AG04450 (cell line): ENCODE measurements at regions of chr15 and their contacts with region 1.

Region 1: GRCh38 chr15:94119923-94120775 is 111.2 kb upstream of the MCTP2 start:
- DNase-seq: peak; percentile 84
- H3K4me3 ChIP-seq: no peak overlapping the region
- H3K27ac ChIP-seq: no peak overlapping the region
- H3K27me3 ChIP-seq: no peaks in the 10 kb centered on the region
- CTCF ChIP-seq: peak; percentile 100

Region 2: GRCh38 chr15:93087825-93088199 is 1032.3 kb before region 1 on chr15:
- CTCF ChIA-PET with region 1: interaction called, 31 read pairs
- POLR2A ChIA-PET with region 1: no interaction called
- DNase-seq: no peak
- H3K4me3 ChIP-seq: no peak overlapping the region; the same call in 1 of the 2 replicates
- H3K27ac ChIP-seq: no peak overlapping the region
- H3K27me3 ChIP-seq: peaks cover 60% of the 10 kb centered on the region
- CTCF ChIP-seq: peak; percentile 74

Region 3: GRCh38 chr15:93288728-93289294 is 831.3 kb before region 1 on chr15:
- CTCF ChIA-PET with region 1: no interaction called
- POLR2A ChIA-PET with region 1: no interaction called
- DNase-seq: no peak
- H3K4me3 ChIP-seq: no peak overlapping the region
- H3K27ac ChIP-seq: no peak overlapping the region
- H3K27me3 ChIP-seq: no peaks in the 10 kb centered on the region
- CTCF ChIP-seq: no peak

Region 4: GRCh38 chr15:93989440-93989998 is 130.6 kb before region 1 on chr15:
- CTCF ChIA-PET with region 1: interaction called, 21 read pairs
- POLR2A ChIA-PET with region 1: interaction called, 4 read pairs
- DNase-seq: no peak
- H3K4me3 ChIP-seq: no peak overlapping the region
- H3K27ac ChIP-seq: no peak overlapping the region
- H3K27me3 ChIP-seq: no peaks in the 10 kb centered on the region
- CTCF ChIP-seq: no peak

Region 5: DNA sequence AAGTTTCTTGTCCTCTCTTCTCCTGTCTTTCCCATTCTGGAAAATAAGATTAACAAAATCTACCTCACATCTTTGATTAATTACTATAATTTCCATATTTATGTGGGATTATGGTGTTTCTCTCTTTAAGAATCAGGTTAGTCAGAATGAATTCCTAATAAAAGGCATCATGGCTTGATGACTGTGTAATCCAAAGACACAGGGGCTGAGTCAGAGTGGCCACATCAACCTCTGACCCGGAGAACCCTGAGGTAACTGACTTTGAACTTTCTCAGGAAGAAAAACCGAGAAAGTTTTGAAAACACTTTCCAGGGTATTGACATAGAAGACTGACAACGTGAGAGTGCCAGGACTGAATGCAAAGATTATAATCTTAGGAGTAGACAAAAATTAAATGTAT is 59.1 kb before region 1 on chr15:
- CTCF ChIA-PET with region 1: interaction called, 22 read pairs
- POLR2A ChIA-PET with region 1: no interaction called
- DNase-seq: no peak
- H3K4me3 ChIP-seq: no peak overlapping the region
- H3K27ac ChIP-seq: no peak overlapping the region
- H3K27me3 ChIP-seq: no peaks in the 10 kb centered on the region
- CTCF ChIP-seq: no peak

Region 6: GRCh38 chr15:94098921-94099573 is 21.1 kb before region 1 on chr15:
- CTCF ChIA-PET with region 1: interaction called, 17 read pairs
- POLR2A ChIA-PET with region 1: no interaction called
- DNase-seq: no peak
- H3K4me3 ChIP-seq: no peak overlapping the region
- H3K27ac ChIP-seq: no peak overlapping the region
- H3K27me3 ChIP-seq: no peaks in the 10 kb centered on the region
- CTCF ChIP-seq: no peak

Region 7: GRCh38 chr15:94324117-94324826 is 204.1 kb after region 1 on chr15:
- CTCF ChIA-PET with region 1: interaction called, 22 read pairs
- POLR2A ChIA-PET with region 1: no interaction called
- DNase-seq: peak; percentile 48
- H3K4me3 ChIP-seq: no peak overlapping the region
- H3K27ac ChIP-seq: no peak overlapping the region
- H3K27me3 ChIP-seq: no peaks in the 10 kb centered on the region
- CTCF ChIP-seq: peak; percentile 95

Region 8: GRCh38 chr15:94387849-94388441 is 267.8 kb after region 1 on chr15:
- CTCF ChIA-PET with region 1: no interaction called
- POLR2A ChIA-PET with region 1: no interaction called
- DNase-seq: no peak
- H3K4me3 ChIP-seq: no peak overlapping the region
- H3K27ac ChIP-seq: no peak overlapping the region
- H3K27me3 ChIP-seq: no peaks in the 10 kb centered on the region
- CTCF ChIP-seq: no peak